WTC11 (cell line): ENCODE measurements at regions of chr5 and their contacts with region 1.

Region 1: GRCh38 chr5:350355-350754 is 28.8 kb downstream of the AHRR start:
- DNase-seq: peak; percentile 85
- ATAC-seq: peak; percentile 80
- H3K4me3 Mint-ChIP-seq: no peak overlapping the region; the same call in 1 of the 2 replicates
- H3K27ac Mint-ChIP-seq: peak overlapping the region; percentile 9; the same call in 1 of the 2 replicates
- H3K4me1 Mint-ChIP-seq: peaks cover 17% of the 10 kb centered on the region
- H3K27me3 Mint-ChIP-seq: no peaks in the 10 kb centered on the region
- CTCF ChIP-seq: peak; percentile 33; the same call in 1 of the 2 replicates

Region 2: GRCh38 chr5:199950-200645 is 150.3 kb before region 1 on chr5:
- CTCF ChIA-PET with region 1: no interaction called
- POLR2A ChIA-PET with region 1: no interaction called
- DNase-seq: no peak
- ATAC-seq: peak; percentile 31; the same call in 1 of the 2 replicates
- H3K4me3 Mint-ChIP-seq: no peak overlapping the region
- H3K27ac Mint-ChIP-seq: no peak overlapping the region
- H3K4me1 Mint-ChIP-seq: peaks cover 11% of the 10 kb centered on the region
- H3K27me3 Mint-ChIP-seq: no peaks in the 10 kb centered on the region
- CTCF ChIP-seq: no peak

Region 3: DNA sequence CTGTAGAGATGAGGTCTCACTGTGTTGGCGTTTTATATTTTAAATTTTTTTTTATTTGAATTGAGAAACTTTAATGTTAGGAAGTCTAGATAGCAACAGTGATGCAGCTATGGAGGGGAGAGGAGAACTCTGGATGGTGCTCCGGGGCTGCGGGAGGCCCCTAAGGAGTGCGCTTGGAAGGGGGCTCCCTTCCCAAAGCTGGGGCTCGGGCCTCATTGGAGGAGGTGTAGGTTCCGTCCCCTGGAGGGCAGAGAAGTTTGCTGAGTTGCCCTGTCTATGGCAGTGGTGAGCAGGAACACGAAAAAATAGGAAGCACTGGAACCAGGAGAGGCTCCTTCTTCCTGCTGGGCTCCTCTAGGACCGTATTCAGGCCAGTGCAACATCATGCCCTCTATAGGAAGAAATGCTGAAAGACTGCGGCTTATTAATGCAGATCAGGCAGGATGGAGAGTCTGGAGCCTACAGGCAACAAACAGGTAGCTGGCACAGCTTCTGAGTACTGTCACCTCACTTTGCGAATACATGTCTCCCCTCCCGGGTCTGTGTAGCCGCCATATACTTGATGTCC is 12.7 kb before region 1 on chr5:
- CTCF ChIA-PET with region 1: interaction called, 20 read pairs
- POLR2A ChIA-PET with region 1: no interaction called
- DNase-seq: no peak
- ATAC-seq: peak; percentile 97
- H3K4me3 Mint-ChIP-seq: no peak overlapping the region
- H3K27ac Mint-ChIP-seq: no peak overlapping the region
- H3K4me1 Mint-ChIP-seq: 0 out of 2 replicates have a peak, but pooled peaks cover 4% of the 10 kb centered on the region
- H3K27me3 Mint-ChIP-seq: peaks cover 11% of the 10 kb centered on the region
- CTCF ChIP-seq: no peak

Region 4: DNA sequence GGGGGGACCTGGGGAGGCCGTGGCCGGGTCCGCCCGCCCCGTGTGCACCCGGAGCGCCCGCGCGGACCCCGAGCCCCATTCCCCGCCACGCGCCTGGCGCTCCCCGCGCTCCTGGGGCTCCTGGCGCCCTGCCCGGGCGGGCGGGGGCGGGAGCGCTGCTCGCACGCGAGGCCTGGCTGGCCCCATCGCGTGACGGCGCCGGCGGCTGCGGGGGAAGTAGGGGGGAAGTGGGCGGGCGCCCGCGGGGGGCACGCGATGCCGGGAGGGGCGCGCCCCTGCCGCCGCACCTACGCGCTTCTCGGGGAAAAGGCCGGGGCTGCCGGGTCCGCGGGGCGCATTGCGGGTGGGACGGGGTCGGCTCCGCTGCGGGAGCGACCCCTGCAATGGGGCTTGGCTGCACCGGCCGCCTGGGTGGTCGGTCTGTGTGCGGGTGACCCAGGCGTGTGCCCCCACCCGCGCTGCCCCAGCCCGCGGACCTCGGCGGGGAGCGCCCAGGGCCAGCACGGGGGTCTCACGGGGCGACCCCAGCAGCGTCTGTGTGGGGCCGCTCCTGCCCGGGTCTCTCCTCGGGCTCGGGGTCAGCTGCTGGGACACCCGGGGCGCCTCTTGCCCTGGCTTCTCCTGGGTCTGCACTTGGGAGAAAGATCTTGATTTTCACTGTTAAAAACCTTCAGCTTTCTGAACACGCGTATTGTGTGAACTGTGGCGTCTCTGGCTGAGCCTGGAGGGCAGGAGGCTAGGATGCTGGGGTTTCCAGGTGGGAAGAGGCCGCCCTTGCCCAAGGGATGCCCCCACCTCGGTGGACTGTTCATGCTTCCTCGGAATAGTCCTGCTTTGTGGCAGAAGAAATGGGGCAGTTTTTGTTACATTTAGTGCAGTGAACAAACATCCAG is 23.6 kb after region 1 on chr5:
- CTCF ChIA-PET with region 1: interaction called, 15 read pairs
- POLR2A ChIA-PET with region 1: no interaction called
- DNase-seq: peak; percentile 38
- ATAC-seq: peak; percentile 38
- H3K4me3 Mint-ChIP-seq: peak overlapping the region; percentile 57
- H3K27ac Mint-ChIP-seq: no peak overlapping the region
- H3K4me1 Mint-ChIP-seq: peaks cover 2% of the 10 kb centered on the region; the same call in 1 of the 2 replicates
- H3K27me3 Mint-ChIP-seq: peaks cover 13% of the 10 kb centered on the region
- CTCF ChIP-seq: no peak

Region 5: GRCh38 chr5:418681-419121 is 68.3 kb after region 1 on chr5:
- CTCF ChIA-PET with region 1: interaction called, 17 read pairs
- POLR2A ChIA-PET with region 1: no interaction called
- DNase-seq: peak; percentile 17
- ATAC-seq: no peak
- H3K4me3 Mint-ChIP-seq: no peak overlapping the region
- H3K27ac Mint-ChIP-seq: no peak overlapping the region
- H3K4me1 Mint-ChIP-seq: peaks cover 18% of the 10 kb centered on the region
- H3K27me3 Mint-ChIP-seq: no peaks in the 10 kb centered on the region; the same call in 1 of the 2 replicates
- CTCF ChIP-seq: no peak

Region 6: DNA sequence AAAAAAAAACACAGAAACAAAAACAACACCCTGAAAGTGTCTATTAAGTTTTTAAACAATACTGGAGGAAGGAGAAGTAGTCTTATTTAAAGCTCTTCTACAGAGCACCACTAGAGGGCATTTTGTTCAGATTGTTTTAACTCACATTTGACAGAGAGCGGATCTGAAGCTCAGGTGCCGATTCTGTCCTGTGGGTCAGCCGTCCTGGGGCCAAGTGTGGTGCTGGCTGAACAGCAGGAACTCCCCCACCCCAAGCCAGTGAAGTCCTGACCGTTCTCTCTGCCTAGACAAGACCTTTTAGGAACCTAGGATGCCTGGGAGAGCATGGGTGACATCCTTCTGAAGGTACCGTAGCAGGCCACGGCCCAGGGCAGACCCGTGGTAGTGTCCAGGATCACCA is 96.5 kb after region 1 on chr5:
- CTCF ChIA-PET with region 1: interaction called, 17 read pairs
- POLR2A ChIA-PET with region 1: interaction called, 3 read pairs
- DNase-seq: peak; percentile 13
- ATAC-seq: peak; percentile 26; the same call in 1 of the 2 replicates
- H3K4me3 Mint-ChIP-seq: no peak overlapping the region
- H3K27ac Mint-ChIP-seq: no peak overlapping the region
- H3K4me1 Mint-ChIP-seq: peaks cover 14% of the 10 kb centered on the region
- H3K27me3 Mint-ChIP-seq: peaks cover under 1% of the 10 kb centered on the region
- CTCF ChIP-seq: peak; percentile 41; the same call in 1 of the 2 replicates

Region 7: GRCh38 chr5:538801-539468 is 188.6 kb after region 1 on chr5:
- CTCF ChIA-PET with region 1: no interaction called
- POLR2A ChIA-PET with region 1: no interaction called
- DNase-seq: peak; percentile 7
- ATAC-seq: no peak
- H3K4me3 Mint-ChIP-seq: no peak overlapping the region
- H3K27ac Mint-ChIP-seq: no peak overlapping the region
- H3K4me1 Mint-ChIP-seq: no peaks in the 10 kb centered on the region
- H3K27me3 Mint-ChIP-seq: no peaks in the 10 kb centered on the region
- CTCF ChIP-seq: no peak